ENCODE measurements at regions of chr22 and their contacts with region 1.

Region 1: DNA sequence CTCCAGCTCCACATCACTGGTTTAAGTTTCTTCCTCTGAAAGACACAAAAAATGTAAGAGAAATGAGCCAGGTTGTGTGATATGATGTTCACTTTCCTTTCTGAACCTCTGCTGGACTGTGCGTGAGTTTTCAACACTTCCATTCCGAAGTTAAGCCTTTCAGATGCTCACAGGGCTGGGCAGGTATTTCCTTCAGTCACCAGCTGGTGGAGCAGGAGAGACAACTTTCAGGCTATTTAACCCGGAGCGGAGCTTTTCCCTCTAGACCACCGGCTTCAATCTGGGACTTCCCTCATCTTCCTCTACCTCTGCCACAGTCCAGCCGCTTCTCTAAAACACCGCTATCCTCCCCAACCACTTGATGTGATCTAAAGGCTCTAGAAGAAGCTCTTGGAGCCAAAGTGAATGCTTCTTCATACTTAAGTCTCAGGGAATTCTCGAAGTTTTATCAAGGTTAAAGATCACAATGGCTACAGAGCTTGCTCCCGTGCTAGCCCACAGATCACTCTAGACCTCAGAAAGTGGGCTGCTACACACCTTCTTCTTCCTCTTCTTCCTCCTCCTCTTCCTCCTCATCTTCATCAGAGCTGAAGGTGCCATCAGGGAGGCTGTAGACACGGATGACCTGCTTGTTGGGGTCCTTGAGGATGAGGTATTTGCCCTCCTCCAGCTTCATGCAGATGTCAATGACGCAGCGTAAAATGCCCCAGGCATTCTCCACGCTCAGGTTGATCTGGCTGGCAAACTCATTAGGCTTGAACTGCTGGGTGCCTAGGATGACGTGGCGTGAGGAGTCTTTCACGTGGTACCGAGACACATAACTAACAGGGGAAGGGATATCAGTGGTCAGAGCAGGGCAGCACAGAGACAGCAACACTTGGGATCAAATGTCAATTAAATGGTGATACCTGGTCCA is 4.4 kb upstream of the FOXRED2 start:
- DNase-seq: no peak
- H3K4me3 ChIP-seq: no peak overlapping the region
- H3K27me3 ChIP-seq: no peaks in the 10 kb centered on the region
- CTCF ChIP-seq: peak; percentile 72

Region 2: DNA sequence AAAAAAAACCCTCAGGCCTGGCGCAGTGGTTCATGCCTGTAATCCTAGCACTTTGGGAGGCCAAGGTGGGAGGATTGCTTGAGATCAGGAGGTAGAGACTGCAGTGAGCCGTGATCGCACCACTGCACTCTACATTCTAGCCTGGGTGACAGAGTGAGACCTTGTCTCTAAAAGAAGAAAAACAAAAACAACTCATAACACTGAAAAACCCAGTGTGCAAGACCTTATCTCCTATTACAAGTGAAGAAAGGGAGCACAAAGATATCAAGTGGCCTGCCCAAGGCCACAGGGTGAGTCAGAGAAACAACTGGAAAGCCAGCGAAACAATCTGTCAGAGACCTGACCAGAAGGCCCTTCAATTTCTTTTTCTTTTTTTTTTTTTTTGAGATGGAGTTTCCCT is 32.3 kb before region 1 on chr22:
- CTCF ChIA-PET with region 1: no interaction called
- POLR2A ChIA-PET with region 1: no interaction called
- DNase-seq: no peak
- H3K4me3 ChIP-seq: no peak overlapping the region
- H3K27me3 ChIP-seq: no peaks in the 10 kb centered on the region
- CTCF ChIP-seq: no peak

Region 3: GRCh38 chr22:36528795-36529751 is 17.8 kb after region 1 on chr22 and contains the start of gene EIF3D:
- CTCF ChIA-PET with region 1: interaction called, 63 read pairs
- POLR2A ChIA-PET with region 1: interaction called, 3 read pairs
- DNase-seq: peak; percentile 96
- H3K4me3 ChIP-seq: peak within 1 kb of the TSS; percentile 80
- H3K27me3 ChIP-seq: no peaks in the 10 kb centered on the region
- CTCF ChIP-seq: no peak
- polyA plus RNA-seq, gene EIF3D: 420 and 505 TPM in 2 replicates

Measured in BJ (cell line).